CD8-positive, alpha-beta T cell (primary cell): ENCODE measurements at regions of chr1 and their contacts with region 1.

Region 1: DNA sequence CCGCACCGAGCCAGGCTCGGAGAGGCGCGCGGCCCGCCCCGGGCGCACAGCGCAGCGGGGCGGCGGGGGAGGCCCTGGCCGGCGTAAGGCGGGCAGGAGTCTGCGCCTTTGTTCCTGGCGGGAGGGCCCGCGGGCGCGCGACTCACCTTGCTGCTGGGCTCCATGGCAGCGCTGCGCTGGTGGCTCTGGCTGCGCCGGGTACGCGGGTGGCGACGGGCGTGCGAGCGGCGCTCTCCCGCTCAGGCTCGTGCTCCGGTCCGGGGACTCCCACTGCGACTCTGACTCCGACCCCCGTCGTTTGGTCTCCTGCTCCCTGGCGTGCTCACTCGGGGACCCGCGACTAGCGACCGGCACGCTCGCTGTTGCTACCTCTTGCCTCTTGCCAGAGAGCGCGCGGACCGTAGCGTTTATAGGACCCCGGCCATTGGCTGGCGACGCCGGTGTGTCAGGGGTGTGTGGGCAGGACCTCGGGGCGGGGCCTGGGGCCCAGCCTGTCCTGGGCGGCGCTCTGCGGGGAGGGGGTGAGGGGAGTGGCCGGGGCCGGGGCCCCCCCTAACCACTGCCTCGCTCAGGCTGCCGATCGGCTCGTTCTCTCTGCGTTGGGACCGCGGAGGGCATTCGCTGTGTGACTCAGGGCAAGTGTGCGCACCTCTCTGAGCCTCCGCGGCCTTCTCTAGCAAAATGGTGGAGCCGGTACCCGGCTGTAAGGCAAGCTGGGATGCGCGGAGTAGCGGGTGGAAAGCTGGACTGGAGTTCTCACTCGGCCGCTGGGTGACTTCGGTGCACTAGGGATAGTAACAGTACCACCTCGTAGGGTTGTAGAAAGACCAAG is at the start of gene SLC2A1:
- DNase-seq: peak; percentile 92 to 98 (median 96)
- ATAC-seq: peak; percentile 90
- H3K4me3 ChIP-seq: peak within 1 kb of the TSS; percentile 79 to 96
- H3K4me3 Mint-ChIP-seq: peak within 1 kb of the TSS; percentile 98
- H3K27ac ChIP-seq: peak within 1 kb of the TSS; percentile 76 to 86
- H3K27ac Mint-ChIP-seq: peak within 1 kb of the TSS; percentile 99
- H3K4me1 ChIP-seq: peaks cover 42% of the 10 kb centered on the region
- H3K4me1 Mint-ChIP-seq: peaks cover 51% of the 10 kb centered on the region
- H3K27me3 ChIP-seq: no peaks in the 10 kb centered on the region
- H3K27me3 Mint-ChIP-seq: no peaks in the 10 kb centered on the region
- CTCF ChIP-seq: no peak
- total RNA-seq, gene SLC2A1: 85.0 to 97.2 TPM

Region 2: DNA sequence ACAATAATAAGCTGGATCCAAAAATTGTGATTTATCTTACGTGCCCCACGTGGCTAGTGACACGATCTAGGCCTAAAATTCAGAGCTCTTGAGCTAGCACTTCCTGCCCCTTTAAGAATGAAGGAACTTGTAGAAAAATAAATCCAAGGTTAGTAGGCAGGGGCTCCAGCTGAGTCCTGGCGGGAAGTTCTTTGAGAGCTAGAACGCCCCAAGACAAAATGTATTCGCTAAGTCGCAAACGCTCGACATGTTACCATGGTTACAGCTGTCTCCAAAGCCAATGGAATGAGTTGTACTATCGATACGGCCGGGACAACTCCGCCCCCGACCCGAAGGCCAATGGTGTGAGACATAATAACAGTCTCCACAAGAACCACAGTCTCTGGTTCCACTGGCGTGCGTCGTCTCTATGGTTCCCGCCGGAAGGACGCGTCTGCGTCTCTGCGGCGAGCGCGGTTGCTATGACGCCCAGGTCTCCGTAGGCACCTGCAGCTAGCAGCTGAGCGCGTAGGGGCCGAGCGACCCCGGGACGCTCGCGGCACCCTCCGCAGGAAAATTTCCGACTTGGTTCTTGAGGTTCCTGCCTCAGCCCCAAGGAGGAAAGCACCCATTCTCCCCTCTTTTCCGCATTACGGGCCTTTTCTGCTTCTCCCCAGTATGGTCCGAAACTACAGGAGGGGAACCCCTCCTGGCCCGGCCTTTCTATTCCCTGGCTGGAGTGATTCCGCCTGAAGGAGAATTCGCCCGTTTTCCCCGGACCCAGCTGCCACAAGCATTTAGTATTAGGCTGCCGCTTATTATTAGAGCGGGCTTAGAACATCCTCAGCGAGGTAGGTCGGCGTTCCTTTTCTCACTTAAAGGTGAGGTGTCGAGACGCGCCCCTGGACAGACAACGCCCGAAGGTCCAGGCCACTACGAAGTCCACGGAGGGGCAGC is 495.6 kb before region 1 on chr1 and contains the start of gene CCDC30:
- CTCF ChIA-PET with region 1: no interaction called
- POLR2A ChIA-PET with region 1: no interaction called
- intact Hi-C with region 1: loop called in 1 of 2 experiments (anchors 10 kb)
- DNase-seq: peak; percentile 92 to 99 (median 94)
- ATAC-seq: peak; percentile 98
- H3K4me3 ChIP-seq: peak within 1 kb of the TSS; percentile 60 to 62
- H3K4me3 Mint-ChIP-seq: peak within 1 kb of the TSS; percentile 84
- H3K27ac ChIP-seq: peak within 1 kb of the TSS; percentile 70 to 83
- H3K27ac Mint-ChIP-seq: peak within 1 kb of the TSS; percentile 93
- H3K4me1 ChIP-seq: peaks cover 23% of the 10 kb centered on the region
- H3K4me1 Mint-ChIP-seq: peaks cover 40% of the 10 kb centered on the region
- H3K27me3 ChIP-seq: no peaks in the 10 kb centered on the region
- H3K27me3 Mint-ChIP-seq: no peaks in the 10 kb centered on the region
- CTCF ChIP-seq: no peak
- total RNA-seq, gene CCDC30: 2.5 to 2.8 TPM

Region 3: GRCh38 chr1:42766741-42767509 is 191.8 kb before region 1 on chr1 and contains the starts of genes C1orf50 and P3H1:
- CTCF ChIA-PET with region 1: no interaction called
- POLR2A ChIA-PET with region 1: interaction called, 8 read pairs
- intact Hi-C with region 1: loop called in 1 of 2 experiments (anchors 1 kb)
- DNase-seq: peak; percentile 99 to 100 (median 99)
- ATAC-seq: peak; percentile 92
- H3K4me3 ChIP-seq: peak within 1 kb of the TSS; percentile 73 to 97
- H3K4me3 Mint-ChIP-seq: no peak within 1 kb of the TSS
- H3K27ac ChIP-seq: peak within 1 kb of the TSS; percentile 87 to 88
- H3K27ac Mint-ChIP-seq: peak within 1 kb of the TSS; percentile 97
- H3K4me1 ChIP-seq: peaks cover 40% of the 10 kb centered on the region
- H3K4me1 Mint-ChIP-seq: peaks cover 36% of the 10 kb centered on the region
- H3K27me3 ChIP-seq: no peaks in the 10 kb centered on the region
- H3K27me3 Mint-ChIP-seq: no peaks in the 10 kb centered on the region
- CTCF ChIP-seq: no peak
- total RNA-seq, gene C1orf50: 16.1 to 20.3 TPM
- total RNA-seq, gene P3H1: 19.6 to 22.5 TPM

Region 4: GRCh38 chr1:42846257-42847110 is 112.2 kb before region 1 on chr1 and contains the start of gene ZNF691:
- CTCF ChIA-PET with region 1: no interaction called
- POLR2A ChIA-PET with region 1: interaction called, 4 read pairs
- intact Hi-C with region 1: loop called in 1 of 2 experiments (anchors 10 kb)
- DNase-seq: peak; percentile 71 to 96 (median 87)
- ATAC-seq: peak; percentile 97
- H3K4me3 ChIP-seq: peak within 1 kb of the TSS; percentile 74 to 96
- H3K4me3 Mint-ChIP-seq: peak within 1 kb of the TSS; percentile 92
- H3K27ac ChIP-seq: peak within 1 kb of the TSS; percentile 46 to 72
- H3K27ac Mint-ChIP-seq: peak within 1 kb of the TSS; percentile 88
- H3K4me1 ChIP-seq: peaks cover 23% of the 10 kb centered on the region
- H3K4me1 Mint-ChIP-seq: peaks cover 38% of the 10 kb centered on the region
- H3K27me3 ChIP-seq: no peaks in the 10 kb centered on the region
- H3K27me3 Mint-ChIP-seq: no peaks in the 10 kb centered on the region
- CTCF ChIP-seq: no peak
- total RNA-seq, gene ZNF691: 1.1 to 1.3 TPM

Region 5: GRCh38 chr1:42936309-42937078 is 22.2 kb before region 1 on chr1:
- CTCF ChIA-PET with region 1: interaction called, 10 read pairs
- POLR2A ChIA-PET with region 1: interaction called, 16 read pairs
- intact Hi-C with region 1: loop called (anchors 1 kb)
- DNase-seq: peak in 5 of 9 experiments; percentile 47 to 83 (median 67)
- ATAC-seq: peak; percentile 35
- H3K4me3 ChIP-seq: no peak overlapping the region
- H3K4me3 Mint-ChIP-seq: peak overlapping the region; percentile 42
- H3K27ac ChIP-seq: peak overlapping the region; percentile 19 to 90
- H3K27ac Mint-ChIP-seq: peak overlapping the region; percentile 95
- H3K4me1 ChIP-seq: peaks cover 79% of the 10 kb centered on the region
- H3K4me1 Mint-ChIP-seq: peaks cover 97% of the 10 kb centered on the region
- H3K27me3 ChIP-seq: no peaks in the 10 kb centered on the region
- H3K27me3 Mint-ChIP-seq: no peaks in the 10 kb centered on the region
- CTCF ChIP-seq: no peak

Region 6: GRCh38 chr1:44799770-44800584 is 1841.3 kb after region 1 on chr1 and contains the start of gene PLK3:
- CTCF ChIA-PET with region 1: no interaction called
- POLR2A ChIA-PET with region 1: no interaction called
- intact Hi-C with region 1: loop called in 1 of 2 experiments (anchors 10 kb)
- DNase-seq: peak; percentile 97 to 99 (median 98)
- ATAC-seq: peak; percentile 83
- H3K4me3 ChIP-seq: peak within 1 kb of the TSS; percentile 79 to 95
- H3K4me3 Mint-ChIP-seq: peak within 1 kb of the TSS; percentile 87
- H3K27ac ChIP-seq: peak within 1 kb of the TSS; percentile 91 to 98
- H3K27ac Mint-ChIP-seq: peak within 1 kb of the TSS; percentile 98
- H3K4me1 ChIP-seq: peaks cover 29% of the 10 kb centered on the region
- H3K4me1 Mint-ChIP-seq: peaks cover 37% of the 10 kb centered on the region
- H3K27me3 ChIP-seq: no peaks in the 10 kb centered on the region
- H3K27me3 Mint-ChIP-seq: no peaks in the 10 kb centered on the region
- CTCF ChIP-seq: peak; percentile 81
- total RNA-seq, gene PLK3: 568 to 599 TPM